Astrocyte of the cerebellum (primary cell): ENCODE measurements at regions of chr5 and their contacts with region 1.

Region 1: GRCh38 chr5:127431977-127432585 is 85.4 kb upstream of the PRRC1 start:
- DNase-seq: no peak
- H3K4me3 ChIP-seq: no peak overlapping the region
- CTCF ChIP-seq: no peak

Region 2: GRCh38 chr5:126640866-126641265 is 791.2 kb before region 1 on chr5:
- in situ Hi-C with region 1: no loop called
- DNase-seq: no peak
- H3K4me3 ChIP-seq: no peak overlapping the region
- CTCF ChIP-seq: no peak

Region 3: DNA sequence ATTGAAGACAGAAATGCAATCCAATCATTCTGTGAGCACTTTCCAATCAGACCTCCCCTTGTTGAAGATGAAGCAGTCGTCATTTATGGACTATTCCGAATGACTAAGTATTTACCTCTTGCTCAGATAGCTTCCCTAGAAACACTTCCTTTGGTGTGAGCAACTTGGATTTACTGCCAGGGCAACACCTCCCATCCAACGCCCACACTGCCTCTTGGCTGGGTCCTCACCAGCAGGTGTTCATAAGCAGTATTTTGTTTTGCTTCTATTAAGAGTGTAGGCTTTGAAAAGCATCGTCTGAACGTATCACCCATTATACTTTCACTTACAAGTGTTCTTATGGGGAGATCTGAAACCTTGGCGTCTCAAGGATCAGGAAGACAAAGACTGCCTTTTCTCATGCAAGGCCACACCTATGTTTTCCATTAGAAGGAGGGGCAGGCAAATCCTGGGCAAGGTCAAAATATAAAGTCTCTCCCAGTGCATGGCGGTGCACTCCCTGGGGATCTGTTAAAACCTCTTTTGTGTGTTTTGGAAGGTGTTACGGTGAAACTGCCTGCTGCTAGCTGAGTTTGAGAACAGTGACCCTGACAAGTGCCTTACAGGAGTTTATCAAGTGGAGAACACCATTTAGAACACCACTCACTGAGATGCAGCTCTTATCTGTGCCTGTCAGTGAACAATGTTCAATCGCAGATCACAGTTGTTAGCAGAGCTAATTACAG is 391.1 kb before region 1 on chr5:
- in situ Hi-C with region 1: no loop called
- DNase-seq: no peak
- H3K4me3 ChIP-seq: no peak overlapping the region
- CTCF ChIP-seq: no peak

Region 4: DNA sequence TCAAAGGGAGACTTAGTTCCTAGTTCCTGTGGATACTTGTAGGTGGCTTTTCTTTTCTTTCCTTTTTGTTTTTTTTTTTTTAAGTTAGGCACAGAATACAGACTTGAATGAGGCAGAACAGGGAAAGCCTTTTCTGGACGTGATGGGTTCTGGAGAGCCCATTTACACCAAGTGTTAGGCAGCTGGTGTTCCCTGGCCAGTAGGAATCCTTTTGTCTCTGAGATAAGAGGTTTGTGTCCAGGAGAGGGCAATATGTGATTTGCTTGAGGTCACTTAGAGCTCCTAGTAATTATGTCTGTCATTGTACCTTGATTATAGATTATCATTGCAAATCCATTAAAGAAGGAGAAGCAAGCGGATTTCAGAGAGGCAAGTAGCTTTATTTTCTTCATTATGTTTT is 132.4 kb before region 1 on chr5:
- in situ Hi-C with region 1: loop called (anchors 10 kb)
- DNase-seq: no peak
- H3K4me3 ChIP-seq: no peak overlapping the region
- CTCF ChIP-seq: no peak

Region 5: GRCh38 chr5:127330116-127330515 is 102.0 kb before region 1 on chr5:
- in situ Hi-C with region 1: no loop called
- DNase-seq: no peak
- H3K4me3 ChIP-seq: no peak overlapping the region
- CTCF ChIP-seq: no peak